CD14-positive monocyte (primary cell): ENCODE measurements at regions of chr18 and their contacts with region 1.

Region 1: GRCh38 chr18:3245853-3246634 is 1.6 kb upstream of the MYL12A start:
- DNase-seq: peak; percentile 81 to 89 (median 86)
- H3K4me3 ChIP-seq: peak overlapping the region; percentile 64 to 96 (median 93)
- H3K4me3 Mint-ChIP-seq: peak overlapping the region; percentile 89 to 93
- H3K27ac ChIP-seq: peak overlapping the region; percentile 95 to 96
- H3K27ac Mint-ChIP-seq: peak overlapping the region; percentile 90 to 98 (median 97)
- H3K4me1 ChIP-seq: peaks cover 37 to 48% of the 10 kb centered on the region in 2 donors
- H3K4me1 Mint-ChIP-seq: peaks cover 43% of the 10 kb centered on the region
- H3K27me3 ChIP-seq: no peaks in the 10 kb centered on the region
- H3K27me3 Mint-ChIP-seq: no peaks in the 10 kb centered on the region
- CTCF ChIP-seq: peak; percentile 94

Region 2: GRCh38 chr18:2641638-2642037 is 604.4 kb before region 1 on chr18:
- intact Hi-C with region 1: loop called in 1 of 2 experiments (anchors 5 kb)
- DNase-seq: peak; percentile 29 to 74 (median 60)
- H3K4me3 ChIP-seq: peak overlapping the region in 2 of 3 experiments; percentile 17 to 47
- H3K4me3 Mint-ChIP-seq: peak overlapping the region in 1 of 2 donors; percentile 71
- H3K27ac ChIP-seq: peak overlapping the region in 1 of 2 donors; percentile 47
- H3K27ac Mint-ChIP-seq: peak overlapping the region in 6 of 7 donors; percentile 81 to 94 (median 91)
- H3K4me1 ChIP-seq: peaks cover 93 to 100% of the 10 kb centered on the region in 2 donors
- H3K4me1 Mint-ChIP-seq: peaks cover 47% of the 10 kb centered on the region
- H3K27me3 ChIP-seq: no peaks in the 10 kb centered on the region
- H3K27me3 Mint-ChIP-seq: no peaks in the 10 kb centered on the region
- CTCF ChIP-seq: no peak

Region 3: DNA sequence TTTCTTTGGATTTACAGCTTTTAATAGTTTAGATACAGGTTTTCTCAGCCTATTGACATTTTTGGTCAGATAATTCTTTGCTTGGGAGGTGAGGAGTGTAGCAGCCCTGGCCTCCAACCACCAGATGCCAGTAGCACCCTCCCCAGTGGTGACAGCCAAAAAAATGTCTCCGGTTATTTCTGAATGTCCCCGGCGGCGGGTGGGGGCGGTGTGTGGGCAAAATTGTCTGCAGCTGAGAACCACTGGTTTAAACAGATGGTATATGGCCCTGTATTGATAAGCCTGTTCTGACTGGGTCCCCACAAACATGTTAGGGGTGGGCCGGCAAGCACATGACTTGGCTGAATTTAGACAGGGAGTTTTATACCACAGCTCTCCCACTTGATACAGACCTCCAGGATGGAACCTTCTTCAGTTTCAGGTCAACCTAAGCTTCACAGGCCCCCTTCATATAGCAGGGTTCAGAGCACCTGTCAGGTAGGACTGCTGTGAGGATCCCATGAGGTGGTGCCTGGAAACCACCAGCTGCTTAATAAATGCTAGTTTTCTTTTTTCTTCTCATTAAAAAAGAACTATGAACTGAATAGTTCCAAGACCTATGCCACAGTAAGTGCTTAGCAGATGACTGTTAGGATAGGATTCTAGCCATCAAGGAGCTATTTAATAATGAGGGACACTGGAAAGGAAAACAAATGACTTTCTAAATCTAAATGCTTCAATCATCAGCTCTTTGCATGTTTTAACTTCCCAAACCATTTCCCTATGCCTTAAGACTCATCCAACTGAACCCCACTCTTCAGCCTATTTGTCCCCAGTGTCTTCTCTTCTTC is 251.2 kb before region 1 on chr18:
- intact Hi-C with region 1: loop called in 1 of 2 experiments (anchors 10 kb)
- DNase-seq: peak; percentile 50 to 61 (median 57)
- H3K4me3 ChIP-seq: no peak overlapping the region
- H3K4me3 Mint-ChIP-seq: peak overlapping the region in 1 of 2 donors; percentile 71
- H3K27ac ChIP-seq: no peak overlapping the region
- H3K27ac Mint-ChIP-seq: peak overlapping the region in 4 of 7 donors; percentile 0 to 61 (median 47)
- H3K4me1 ChIP-seq: peaks cover 18 to 28% of the 10 kb centered on the region in 2 donors
- H3K4me1 Mint-ChIP-seq: peaks cover 45% of the 10 kb centered on the region
- H3K27me3 ChIP-seq: no peaks in the 10 kb centered on the region
- H3K27me3 Mint-ChIP-seq: no peaks in the 10 kb centered on the region
- CTCF ChIP-seq: peak; percentile 77

Region 4: DNA sequence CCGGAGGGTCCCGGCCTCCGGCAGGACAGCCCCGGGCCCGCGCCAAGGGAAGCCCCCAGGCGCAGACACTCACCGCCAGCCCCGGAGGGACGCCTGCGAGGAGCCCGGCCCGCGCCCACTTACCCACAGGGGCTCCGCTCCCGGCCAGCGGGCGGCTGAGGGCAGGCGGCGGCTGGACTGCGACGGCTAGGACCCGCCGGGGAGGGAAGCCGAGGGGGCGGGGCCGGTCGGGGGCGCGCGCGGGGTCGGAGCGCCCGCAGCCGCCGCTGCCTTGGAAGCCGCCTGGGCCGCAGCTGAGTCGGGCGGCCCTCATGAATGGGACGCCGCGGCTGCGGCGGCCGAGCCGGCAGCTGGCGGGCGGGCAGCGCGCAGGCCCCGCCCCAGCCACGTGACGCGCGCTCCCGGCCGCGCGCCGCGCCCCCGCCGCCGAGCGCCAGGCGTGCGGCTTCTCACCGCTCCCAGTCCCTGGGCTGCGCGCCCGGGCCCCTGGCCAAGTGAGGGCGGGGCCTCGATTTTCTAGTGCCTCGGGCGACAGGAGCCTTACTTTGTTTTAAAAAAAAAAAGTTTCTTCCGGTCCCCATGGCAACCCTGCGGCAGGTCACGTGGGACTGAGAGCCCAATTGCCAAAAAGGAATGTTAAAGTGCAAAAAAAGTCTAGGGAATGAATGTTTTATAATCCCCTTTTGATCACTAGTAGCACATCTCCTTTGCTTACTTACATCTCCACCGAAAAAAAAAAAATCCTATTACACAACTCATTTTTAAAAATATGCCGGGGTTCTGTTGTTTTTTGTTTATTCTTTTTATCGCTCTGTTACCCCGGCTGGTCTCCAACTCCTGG is 232.9 kb before region 1 on chr18 and contains the start of gene LPIN2:
- intact Hi-C with region 1: loop called in 1 of 2 experiments (anchors 10 kb)
- DNase-seq: peak; percentile 95 to 97 (median 96)
- H3K4me3 ChIP-seq: peak within 1 kb of the TSS; percentile 53 to 85 (median 73)
- H3K4me3 Mint-ChIP-seq: peak within 1 kb of the TSS; percentile 91 to 96
- H3K27ac ChIP-seq: peak within 1 kb of the TSS; percentile 76 to 88
- H3K27ac Mint-ChIP-seq: peak within 1 kb of the TSS; percentile 88 to 94 (median 93)
- H3K4me1 ChIP-seq: peaks cover 80 to 93% of the 10 kb centered on the region in 2 donors
- H3K4me1 Mint-ChIP-seq: peaks cover 83% of the 10 kb centered on the region
- H3K27me3 ChIP-seq: no peaks in the 10 kb centered on the region
- H3K27me3 Mint-ChIP-seq: no peaks in the 10 kb centered on the region
- CTCF ChIP-seq: no peak
- polyA plus RNA-seq, gene LPIN2: 9.3 to 16.3 (median 10.3) TPM

Region 5: DNA sequence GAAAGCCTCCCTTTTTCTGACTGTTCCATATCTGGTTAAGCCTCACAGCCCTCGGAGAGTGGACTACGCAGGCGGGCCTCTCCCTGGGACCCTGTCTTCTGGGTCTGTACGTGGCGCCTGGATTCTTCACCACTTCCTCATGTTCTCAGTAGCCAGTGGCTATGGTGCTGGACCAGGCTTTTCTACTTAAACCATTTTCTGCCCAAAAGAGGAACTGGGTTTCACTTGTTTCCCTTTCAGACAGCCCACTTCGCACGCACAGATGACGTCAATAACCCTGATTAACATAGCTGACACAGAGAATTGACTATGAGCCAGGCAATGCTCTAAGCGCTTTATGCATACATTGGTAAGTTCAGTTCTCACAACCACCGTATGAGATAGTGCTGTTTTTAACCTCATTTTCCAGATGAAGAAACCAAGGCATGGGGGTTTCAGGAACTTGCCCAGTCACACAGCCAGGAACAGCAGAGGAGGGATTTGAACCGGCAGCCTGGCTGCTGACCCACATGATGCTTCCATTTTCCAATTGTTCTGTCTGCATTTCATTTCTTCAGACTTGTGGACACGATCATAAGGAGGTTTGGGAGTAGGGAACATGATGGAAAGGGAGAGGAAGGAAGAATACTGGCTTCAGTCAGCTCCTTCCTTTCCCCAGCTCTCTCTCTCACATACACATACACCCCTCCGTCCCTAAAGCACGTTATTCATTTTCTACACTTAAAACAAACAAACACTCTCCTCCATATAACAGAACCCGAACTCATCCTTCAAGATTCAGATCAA is 67.9 kb before region 1 on chr18:
- intact Hi-C with region 1: loop called (anchors 2 to 5 kb)
- DNase-seq: peak; percentile 99 to 100 (median 100)
- H3K4me3 ChIP-seq: peak overlapping the region in 1 of 3 experiments; percentile 21
- H3K4me3 Mint-ChIP-seq: peak overlapping the region; percentile 43 to 75
- H3K27ac ChIP-seq: peak overlapping the region; percentile 86 to 94
- H3K27ac Mint-ChIP-seq: peak overlapping the region; percentile 97 to 99 (median 98)
- H3K4me1 ChIP-seq: peaks cover 17 to 21% of the 10 kb centered on the region in 2 donors
- H3K4me1 Mint-ChIP-seq: peaks cover 18% of the 10 kb centered on the region
- H3K27me3 ChIP-seq: no peaks in the 10 kb centered on the region
- H3K27me3 Mint-ChIP-seq: no peaks in the 10 kb centered on the region
- CTCF ChIP-seq: no peak

Region 6: DNA sequence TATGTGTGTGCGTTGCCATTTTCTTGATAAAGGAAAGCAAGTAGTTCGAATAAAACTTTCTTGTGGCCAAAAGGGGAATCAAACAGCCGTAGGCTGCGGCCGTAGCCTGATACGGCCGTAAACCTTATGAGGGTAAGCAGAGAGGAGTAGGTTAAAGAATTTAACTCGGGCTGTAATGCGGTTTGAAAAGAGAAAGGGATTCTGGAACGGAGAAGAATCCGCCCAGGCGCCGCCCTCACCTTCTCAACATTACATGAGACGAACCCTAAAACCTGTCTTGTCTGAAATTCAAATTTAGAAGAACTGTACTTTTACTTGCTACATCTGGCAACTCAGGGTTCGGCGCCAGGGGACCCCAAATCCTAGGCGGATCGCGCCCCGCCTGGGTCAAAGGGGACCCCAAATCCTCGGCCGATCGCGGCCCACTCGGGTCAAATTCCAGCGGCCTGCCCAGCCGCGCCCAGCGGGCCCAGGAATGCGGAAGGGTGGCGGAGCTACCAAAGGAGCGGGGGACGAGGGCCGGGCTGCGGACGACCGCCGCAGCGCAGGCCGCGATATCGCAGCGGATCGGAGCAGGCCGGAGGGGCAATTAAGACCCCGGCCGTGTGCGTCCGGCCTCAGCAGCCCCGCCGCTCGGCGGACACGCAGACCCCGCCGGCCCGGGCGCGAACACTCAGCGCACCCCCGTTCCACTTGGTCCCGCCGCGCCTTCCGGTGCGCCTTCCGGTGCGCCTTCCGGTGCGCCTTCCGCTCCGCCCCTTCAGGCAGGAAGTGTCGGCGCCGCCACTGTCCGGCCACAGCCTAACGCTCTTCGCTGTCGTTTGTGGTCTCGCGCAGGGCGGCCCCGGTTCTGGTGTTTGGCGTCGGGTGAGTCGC is 15.6 kb after region 1 on chr18 and contains the start of gene MYL12B:
- intact Hi-C with region 1: loop called in 1 of 2 experiments (anchors 2 kb)
- DNase-seq: peak; percentile 79 to 84 (median 83)
- H3K4me3 ChIP-seq: peak within 1 kb of the TSS; percentile 64 to 84 (median 80)
- H3K4me3 Mint-ChIP-seq: peak within 1 kb of the TSS; percentile 82 to 96
- H3K27ac ChIP-seq: peak within 1 kb of the TSS; percentile 83 to 90
- H3K27ac Mint-ChIP-seq: peak within 1 kb of the TSS; percentile 96 to 99 (median 98)
- H3K4me1 ChIP-seq: peaks cover 47 to 58% of the 10 kb centered on the region in 2 donors
- H3K4me1 Mint-ChIP-seq: peaks cover 62% of the 10 kb centered on the region
- H3K27me3 ChIP-seq: no peaks in the 10 kb centered on the region
- H3K27me3 Mint-ChIP-seq: no peaks in the 10 kb centered on the region
- CTCF ChIP-seq: no peak
- polyA plus RNA-seq, gene MYL12B: 295 to 814 (median 727) TPM